ENCODE measurements at regions of chr10 and their contacts with region 1.

Region 1: DNA sequence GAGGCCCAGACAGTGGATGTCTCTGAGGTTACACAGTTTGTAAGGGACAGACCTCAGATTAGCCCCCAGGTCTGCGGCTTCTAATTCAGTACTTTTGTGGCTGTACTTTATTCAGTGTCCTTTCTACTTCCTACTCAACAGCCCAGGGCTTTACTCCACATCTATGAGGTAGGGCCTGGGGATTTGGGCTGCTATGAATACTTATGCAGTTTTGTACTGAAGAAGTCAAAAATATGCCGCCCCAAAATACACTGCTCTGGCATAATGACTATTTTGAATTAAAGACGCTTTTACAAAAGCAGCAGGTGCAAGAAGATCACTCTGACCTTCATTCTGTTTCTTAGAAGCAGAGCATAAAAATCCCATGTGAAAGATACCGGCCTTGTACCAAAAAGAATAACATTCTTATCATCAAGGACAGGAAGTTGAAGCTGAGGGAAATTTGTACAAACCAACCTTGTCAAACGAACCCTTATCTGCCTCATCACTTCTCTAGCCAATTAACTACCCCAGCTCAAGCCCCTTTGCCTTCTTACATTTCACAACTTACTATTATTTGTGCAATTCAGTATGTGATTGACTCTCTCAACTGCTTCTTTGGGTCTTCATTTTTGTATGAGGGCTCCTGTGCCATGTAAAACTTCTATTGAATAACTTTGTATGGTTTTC is 26.1 kb upstream of the TRUB1 start:
- DNase-seq: no peak
- ATAC-seq: no peak
- H3K4me3 Mint-ChIP-seq: no peak overlapping the region
- H3K27ac Mint-ChIP-seq: no peak overlapping the region
- H3K4me1 Mint-ChIP-seq: no peaks in the 10 kb centered on the region
- H3K27me3 Mint-ChIP-seq: no peaks in the 10 kb centered on the region
- CTCF ChIP-seq: no peak

Region 2: GRCh38 chr10:114925587-114926586 is 14.0 kb after region 1 on chr10:
- CTCF ChIA-PET with region 1: no interaction called
- POLR2A ChIA-PET with region 1: interaction called, 12 read pairs
- intact Hi-C with region 1: no loop called
- DNase-seq: no peak
- ATAC-seq: peak; percentile 77
- H3K4me3 Mint-ChIP-seq: no peak overlapping the region
- H3K27ac Mint-ChIP-seq: no peak overlapping the region
- H3K4me1 Mint-ChIP-seq: peaks cover 10% of the 10 kb centered on the region
- H3K27me3 Mint-ChIP-seq: peaks cover 3% of the 10 kb centered on the region
- CTCF ChIP-seq: no peak

Measured in activated B cell treated with CpG ODN at 0.5 μM for 24 hours (primary cell).